ENCODE measurements at regions of chr14 and their contacts with region 1.

Region 1: DNA sequence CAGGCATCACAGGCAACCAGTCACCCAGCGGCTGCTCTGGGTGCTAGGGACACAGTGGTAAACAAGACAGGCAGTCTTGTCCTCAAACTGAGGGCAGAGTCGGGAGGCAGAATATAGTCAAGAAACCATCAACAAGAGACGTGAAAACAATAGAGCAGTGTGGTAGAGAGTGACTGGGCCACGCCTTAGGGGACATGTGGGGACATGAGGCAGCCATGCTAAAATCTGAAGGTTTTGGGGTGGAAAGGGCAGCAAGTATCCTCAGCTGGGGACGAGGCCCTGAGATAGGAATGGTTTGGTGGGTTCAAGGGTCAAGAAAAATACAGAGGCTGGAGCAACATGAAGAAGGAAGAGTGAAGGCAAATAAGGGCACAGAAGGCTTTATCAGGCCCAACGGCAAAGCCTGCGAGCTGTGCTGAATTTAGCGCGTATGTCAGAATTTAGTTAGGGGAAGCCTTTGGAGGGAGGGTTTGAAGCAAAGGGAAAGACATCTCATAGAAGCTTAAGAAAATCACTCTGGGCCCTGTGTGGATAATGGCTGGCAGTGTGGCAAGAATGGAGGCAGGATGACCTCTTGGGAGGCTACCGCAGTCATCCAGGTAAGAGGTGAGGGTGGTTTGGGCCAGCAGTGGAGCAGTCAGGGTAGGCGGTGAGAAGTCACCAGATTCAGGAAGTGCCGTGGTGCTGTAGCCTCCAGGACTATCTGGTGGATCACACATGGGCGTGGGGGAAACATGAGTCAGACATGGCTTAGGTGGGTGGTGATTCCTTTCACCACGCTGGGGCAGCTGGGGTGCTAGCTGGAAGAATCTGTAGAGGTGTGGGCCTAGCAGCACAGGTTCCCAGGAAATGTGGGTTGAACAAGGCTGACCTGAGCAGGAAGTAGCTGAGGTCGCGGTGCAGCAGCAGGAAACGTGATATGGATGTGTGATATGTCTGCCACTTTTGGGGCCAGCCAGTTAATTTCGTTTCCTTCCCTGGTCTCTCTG is 3.0 kb downstream of the EVL start:
- DNase-seq: peak; percentile 96
- ATAC-seq: peak; percentile 54
- H3K4me3 Mint-ChIP-seq: peak overlapping the region; percentile 97
- H3K27ac Mint-ChIP-seq: peak overlapping the region; percentile 99
- H3K4me1 Mint-ChIP-seq: peaks cover 54% of the 10 kb centered on the region
- H3K27me3 Mint-ChIP-seq: no peaks in the 10 kb centered on the region

Region 2: GRCh38 chr14:100078991-100079725 is 10.9 kb after region 1 on chr14:
- CTCF ChIA-PET with region 1: interaction called, 476 read pairs
- DNase-seq: peak; percentile 96
- ATAC-seq: peak; percentile 80
- H3K4me3 Mint-ChIP-seq: peak overlapping the region; percentile 76
- H3K27ac Mint-ChIP-seq: peak overlapping the region; percentile 89
- H3K4me1 Mint-ChIP-seq: peaks cover 96% of the 10 kb centered on the region
- H3K27me3 Mint-ChIP-seq: no peaks in the 10 kb centered on the region

Region 3: DNA sequence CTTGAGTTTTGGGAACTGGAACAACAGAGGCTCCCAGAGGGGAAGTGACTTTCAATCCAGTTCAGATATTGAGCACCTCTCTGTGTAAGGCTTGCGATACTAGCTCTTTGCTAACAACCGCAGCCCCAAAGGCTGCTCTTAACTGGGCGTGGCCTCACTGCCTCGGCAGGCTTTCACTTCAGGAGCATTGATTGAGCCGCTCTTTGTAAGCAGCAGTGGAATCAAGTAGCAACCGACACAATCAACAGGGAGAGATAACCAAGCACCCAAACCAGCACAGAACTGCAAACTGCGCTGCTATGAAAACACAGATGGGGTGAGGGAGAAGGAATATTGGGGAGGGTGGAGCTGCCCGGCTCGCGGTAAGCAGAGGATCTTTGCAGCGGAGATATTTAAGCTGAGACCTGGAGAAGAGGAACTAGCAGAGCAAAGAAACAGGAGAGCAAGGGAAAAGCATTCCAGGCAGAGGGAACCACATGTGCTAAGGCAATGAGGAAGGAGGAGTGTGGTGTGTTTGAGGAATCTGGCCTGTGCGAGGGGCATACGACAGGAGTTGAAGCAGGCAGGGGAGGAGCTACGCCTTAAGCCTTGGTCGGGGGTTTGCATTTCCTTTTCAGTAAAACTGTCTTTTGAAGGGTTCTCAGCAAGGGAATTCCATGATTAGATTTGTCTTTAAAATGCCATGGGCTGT is 153.4 kb after region 1 on chr14:
- CTCF ChIA-PET with region 1: interaction called, 10 read pairs
- DNase-seq: peak; percentile 89
- ATAC-seq: peak; percentile 93
- H3K4me3 Mint-ChIP-seq: no peak overlapping the region
- H3K27ac Mint-ChIP-seq: no peak overlapping the region
- H3K4me1 Mint-ChIP-seq: peaks cover 33% of the 10 kb centered on the region
- H3K27me3 Mint-ChIP-seq: no peaks in the 10 kb centered on the region